ENCODE measurements at regions of chr22 and their contacts with region 1.

Region 1: DNA sequence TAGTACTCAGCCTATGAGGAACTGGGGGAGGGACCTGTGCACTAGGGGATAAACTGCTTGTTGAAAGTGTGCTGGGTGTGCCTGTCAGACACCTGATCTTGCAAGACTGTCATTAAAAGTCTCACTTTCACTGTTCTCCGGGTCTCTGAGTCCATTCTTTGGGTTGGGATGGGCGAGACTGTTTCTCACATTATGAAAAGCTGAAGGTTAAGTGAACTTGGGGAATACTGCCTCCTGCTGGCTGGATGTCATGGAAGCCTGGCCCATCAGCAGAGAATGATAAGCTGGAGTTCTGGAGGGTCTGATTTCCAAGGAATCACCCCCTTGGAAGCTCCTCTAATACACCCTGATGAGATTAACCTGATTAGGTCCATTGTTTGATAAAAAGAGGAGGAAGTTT is 9.0 kb upstream of the VPREB1 start:
- DNase-seq: peak; percentile 26
- H3K4me3 Mint-ChIP-seq: no peak overlapping the region
- H3K27ac Mint-ChIP-seq: no peak overlapping the region
- H3K4me1 Mint-ChIP-seq: peaks cover 8% of the 10 kb centered on the region
- H3K27me3 Mint-ChIP-seq: no peaks in the 10 kb centered on the region

Region 2: GRCh38 chr22:22195265-22196017 is 40.1 kb before region 1 on chr22:
- intact Hi-C with region 1: loop called (anchors 5 kb)
- DNase-seq: peak; percentile 61
- H3K4me3 Mint-ChIP-seq: no peak overlapping the region
- H3K27ac Mint-ChIP-seq: no peak overlapping the region
- H3K4me1 Mint-ChIP-seq: no peaks in the 10 kb centered on the region
- H3K27me3 Mint-ChIP-seq: peaks cover 25% of the 10 kb centered on the region

Region 3: GRCh38 chr22:22207845-22208564 is 27.6 kb before region 1 on chr22:
- intact Hi-C with region 1: loop called (anchors 1 kb)
- DNase-seq: peak; percentile 76
- H3K4me3 Mint-ChIP-seq: peak overlapping the region; percentile 38
- H3K27ac Mint-ChIP-seq: peak overlapping the region; percentile 74
- H3K4me1 Mint-ChIP-seq: peaks cover 33% of the 10 kb centered on the region
- H3K27me3 Mint-ChIP-seq: peaks cover 7% of the 10 kb centered on the region

Region 4: GRCh38 chr22:22248878-22249277 is 13.3 kb after region 1 on chr22:
- intact Hi-C with region 1: no loop called
- DNase-seq: no peak
- H3K4me3 Mint-ChIP-seq: no peak overlapping the region
- H3K27ac Mint-ChIP-seq: peak overlapping the region; percentile 34
- H3K4me1 Mint-ChIP-seq: peaks cover 19% of the 10 kb centered on the region
- H3K27me3 Mint-ChIP-seq: no peaks in the 10 kb centered on the region

Region 5: GRCh38 chr22:22371031-22371541 is 135.5 kb after region 1 on chr22:
- intact Hi-C with region 1: no loop called
- DNase-seq: no peak
- H3K4me3 Mint-ChIP-seq: no peak overlapping the region
- H3K27ac Mint-ChIP-seq: no peak overlapping the region
- H3K4me1 Mint-ChIP-seq: no peaks in the 10 kb centered on the region
- H3K27me3 Mint-ChIP-seq: peaks cover 47% of the 10 kb centered on the region

Measured in activated T-helper 2 cell treated with anti-CD3 and anti-CD28 coated beads, Interferon-gamma antibody, Interleukin-2, Interleukin-4, amounts not matched to agents 10 μg/mL and 5 μg/mL and 100 μg/mL, durations not matched to agents 14 hours and 24 hours and 36 hours (primary cell).